Cardiac septum (tissue), 1 donor: ENCODE measurements at regions of chr16 and their contacts with region 1.

Region 1: GRCh38 chr16:75402821-75403475 is 30.4 kb downstream of the CFDP1 start:
- DNase-seq: no peak

Region 2: GRCh38 chr16:75198135-75198600 is 204.8 kb before region 1 on chr16:
- intact Hi-C with region 1: loop called (anchors 5 kb)
- DNase-seq: peak; percentile 68

Region 3: GRCh38 chr16:75432828-75433731 is 30.1 kb after region 1 on chr16 and contains the start of gene CFDP1:
- intact Hi-C with region 1: no loop called
- DNase-seq: peak; percentile 99
- total RNA-seq, gene CFDP1: 24.6 TPM